A673 (cell line): ENCODE measurements at regions of chr3 and their contacts with region 1.

Region 1: GRCh38 chr3:141000027-141000663 is 51.0 kb upstream of the SPSB4 start:
- DNase-seq: peak; percentile 72
- H3K4me3 ChIP-seq: no peak overlapping the region
- H3K27ac ChIP-seq: no peak overlapping the region
- H3K4me1 ChIP-seq: no peaks in the 10 kb centered on the region
- H3K27me3 ChIP-seq: no peaks in the 10 kb centered on the region
- CTCF ChIP-seq: peak; percentile 82

Region 2: GRCh38 chr3:140980628-140981027 is 19.5 kb before region 1 on chr3:
- CTCF ChIA-PET with region 1: no interaction called
- POLR2A ChIA-PET with region 1: no interaction called
- intact Hi-C with region 1: no loop called
- DNase-seq: no peak
- H3K4me3 ChIP-seq: no peak overlapping the region
- H3K27ac ChIP-seq: no peak overlapping the region
- H3K4me1 ChIP-seq: no peaks in the 10 kb centered on the region
- H3K27me3 ChIP-seq: no peaks in the 10 kb centered on the region
- CTCF ChIP-seq: no peak

Region 3: GRCh38 chr3:141192345-141192744 is 192.2 kb after region 1 on chr3:
- CTCF ChIA-PET with region 1: interaction called, 7 read pairs
- POLR2A ChIA-PET with region 1: no interaction called
- intact Hi-C with region 1: loop called (anchors 1 kb)
- DNase-seq: peak; percentile 96
- H3K4me3 ChIP-seq: no peak overlapping the region
- H3K27ac ChIP-seq: no peak overlapping the region
- H3K4me1 ChIP-seq: no peaks in the 10 kb centered on the region
- H3K27me3 ChIP-seq: peaks cover 31% of the 10 kb centered on the region
- CTCF ChIP-seq: peak; percentile 98

Region 4: DNA sequence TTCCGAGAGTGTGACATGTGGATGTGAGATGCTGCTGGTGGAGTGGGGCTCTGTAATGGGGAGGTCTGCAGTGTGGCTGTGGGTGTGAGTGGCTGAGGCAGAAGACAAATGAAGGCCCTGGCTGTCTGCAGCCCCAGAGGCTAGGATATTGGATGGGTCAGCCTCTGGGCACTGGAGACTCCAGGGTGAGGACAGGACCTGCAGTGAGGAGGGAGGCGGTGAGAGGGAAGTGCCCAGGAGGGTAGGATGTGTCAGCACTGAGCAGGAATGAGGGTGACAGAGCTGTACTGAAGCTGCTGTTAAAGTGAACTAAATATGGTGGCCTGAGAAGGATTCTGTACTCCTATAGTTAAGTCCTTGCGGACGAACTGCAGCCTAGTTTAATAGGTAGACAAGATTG is 204.2 kb after region 1 on chr3:
- CTCF ChIA-PET with region 1: no interaction called
- POLR2A ChIA-PET with region 1: no interaction called
- intact Hi-C with region 1: no loop called
- DNase-seq: no peak
- H3K4me3 ChIP-seq: no peak overlapping the region
- H3K27ac ChIP-seq: no peak overlapping the region
- H3K4me1 ChIP-seq: no peaks in the 10 kb centered on the region
- H3K27me3 ChIP-seq: no peaks in the 10 kb centered on the region
- CTCF ChIP-seq: no peak